CD4-positive, alpha-beta memory T cell (primary cell): ENCODE measurements at regions of chr4 and their contacts with region 1.

Region 1: DNA sequence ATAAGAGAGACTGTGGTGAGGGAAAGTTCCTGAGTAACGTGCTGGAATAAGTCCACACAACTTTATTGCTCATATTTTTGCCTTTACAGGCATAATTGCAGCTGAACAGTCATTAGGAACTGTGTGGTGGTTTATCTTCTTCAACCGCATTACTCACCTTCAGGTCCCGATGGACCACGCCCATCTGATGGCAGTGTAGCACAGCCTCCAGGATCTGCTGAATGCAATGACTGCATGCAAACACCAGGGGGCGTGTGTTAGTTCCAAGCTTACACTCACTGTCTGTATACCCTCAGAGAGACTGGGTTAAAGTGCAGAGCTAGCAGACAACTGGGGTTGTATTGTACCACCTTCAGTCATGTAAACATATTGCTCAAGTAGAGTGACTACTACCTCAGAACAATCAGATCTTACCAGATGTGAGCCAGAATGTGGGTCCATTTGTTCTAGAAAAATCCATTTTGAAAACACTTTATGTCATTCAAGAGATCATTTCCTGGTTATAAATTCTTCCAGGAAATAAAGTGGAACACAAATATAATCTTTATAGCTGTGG is 214.0 kb downstream of the CAMK2D start:
- DNase-seq: peak; percentile 86 to 94 (median 89)
- H3K4me3 ChIP-seq: no peak overlapping the region
- H3K4me3 Mint-ChIP-seq: peak overlapping the region in 1 of 8 donors; percentile 20
- H3K27ac ChIP-seq: no peak overlapping the region
- H3K27ac Mint-ChIP-seq: peak overlapping the region; percentile 0 to 81 (median 50)
- H3K4me1 ChIP-seq: peaks cover 11% of the 10 kb centered on the region
- H3K4me1 Mint-ChIP-seq: peaks cover 9 to 20% (median 10%) of the 10 kb centered on the region in 4 donors
- H3K27me3 ChIP-seq: no peaks in the 10 kb centered on the region
- H3K27me3 Mint-ChIP-seq: no peaks in the 10 kb centered on the region

Region 2: GRCh38 chr4:113394730-113395530 is 152.6 kb before region 1 on chr4:
- CTCF ChIA-PET with region 1: no interaction called
- POLR2A ChIA-PET with region 1: interaction called, 3 read pairs
- intact Hi-C with region 1: loop called (anchors 2 kb)
- DNase-seq: peak; percentile 55 to 75 (median 73)
- H3K4me3 ChIP-seq: no peak overlapping the region
- H3K4me3 Mint-ChIP-seq: no peak overlapping the region
- H3K27ac ChIP-seq: no peak overlapping the region
- H3K27ac Mint-ChIP-seq: no peak overlapping the region
- H3K4me1 ChIP-seq: no peaks in the 10 kb centered on the region
- H3K4me1 Mint-ChIP-seq: peaks cover 0 to 4% (median 0%) of the 10 kb centered on the region in 4 donors
- H3K27me3 ChIP-seq: peaks cover 6% of the 10 kb centered on the region
- H3K27me3 Mint-ChIP-seq: no peaks in the 10 kb centered on the region

Region 3: DNA sequence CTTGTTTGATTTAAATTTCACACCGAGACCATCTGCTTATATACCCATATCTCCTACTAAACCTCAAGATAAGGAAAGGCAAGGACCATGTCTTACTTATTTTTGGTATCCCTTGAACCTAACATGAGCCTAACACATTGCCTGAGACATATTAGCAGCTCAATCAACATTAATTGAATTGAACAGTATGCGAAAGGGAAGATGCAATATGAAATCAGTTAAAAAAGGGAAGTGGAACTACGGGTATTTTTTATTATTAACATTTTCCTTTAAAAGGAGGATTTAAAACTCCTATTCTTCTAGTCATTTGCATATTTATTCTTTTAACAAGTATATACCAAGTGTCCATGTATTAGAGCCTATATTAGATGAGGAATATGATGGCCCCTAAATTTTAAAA is 16.9 kb after region 1 on chr4:
- CTCF ChIA-PET with region 1: interaction called, 49 read pairs
- POLR2A ChIA-PET with region 1: interaction called, 10 read pairs
- intact Hi-C with region 1: loop called (anchors 1 kb)
- DNase-seq: no peak
- H3K4me3 ChIP-seq: no peak overlapping the region
- H3K4me3 Mint-ChIP-seq: peak overlapping the region in 6 of 8 donors; percentile 58 to 88 (median 73)
- H3K27ac ChIP-seq: no peak overlapping the region
- H3K27ac Mint-ChIP-seq: peak overlapping the region in 1 of 7 donors; percentile 59
- H3K4me1 ChIP-seq: peaks cover 38% of the 10 kb centered on the region
- H3K4me1 Mint-ChIP-seq: peaks cover 33 to 52% (median 41%) of the 10 kb centered on the region in 4 donors
- H3K27me3 ChIP-seq: no peaks in the 10 kb centered on the region
- H3K27me3 Mint-ChIP-seq: no peaks in the 10 kb centered on the region

Region 4: GRCh38 chr4:113636438-113636818 is 88.9 kb after region 1 on chr4:
- CTCF ChIA-PET with region 1: interaction called, 21 read pairs
- POLR2A ChIA-PET with region 1: interaction called, 11 read pairs
- intact Hi-C with region 1: loop called (anchors 1 kb)
- DNase-seq: peak; percentile 35 to 48 (median 42)
- H3K4me3 ChIP-seq: no peak overlapping the region
- H3K4me3 Mint-ChIP-seq: peak overlapping the region in 7 of 8 donors; percentile 53 to 82 (median 61)
- H3K27ac ChIP-seq: peak overlapping the region; percentile 29
- H3K27ac Mint-ChIP-seq: peak overlapping the region; percentile 65 to 85 (median 83)
- H3K4me1 ChIP-seq: peaks cover 48% of the 10 kb centered on the region
- H3K4me1 Mint-ChIP-seq: peaks cover 42 to 61% (median 48%) of the 10 kb centered on the region in 4 donors
- H3K27me3 ChIP-seq: no peaks in the 10 kb centered on the region
- H3K27me3 Mint-ChIP-seq: no peaks in the 10 kb centered on the region

Region 5: GRCh38 chr4:113781439-113782040 is 234.0 kb after region 1 on chr4:
- CTCF ChIA-PET with region 1: no interaction called
- POLR2A ChIA-PET with region 1: no interaction called
- intact Hi-C with region 1: loop called (anchors 5 kb)
- DNase-seq: peak in 4 of 5 donors; percentile 25 to 35 (median 30)
- H3K4me3 ChIP-seq: no peak overlapping the region
- H3K4me3 Mint-ChIP-seq: no peak overlapping the region
- H3K27ac ChIP-seq: no peak overlapping the region
- H3K27ac Mint-ChIP-seq: no peak overlapping the region
- H3K4me1 ChIP-seq: no peaks in the 10 kb centered on the region
- H3K4me1 Mint-ChIP-seq: peaks cover 0 to 8% (median 2%) of the 10 kb centered on the region in 4 donors
- H3K27me3 ChIP-seq: no peaks in the 10 kb centered on the region
- H3K27me3 Mint-ChIP-seq: peaks cover 0 to 1% of the 10 kb centered on the region in 2 donors

Region 6: GRCh38 chr4:113908829-113909228 is 361.3 kb after region 1 on chr4:
- CTCF ChIA-PET with region 1: interaction called, 12 read pairs
- POLR2A ChIA-PET with region 1: interaction called, 4 read pairs
- intact Hi-C with region 1: loop called (anchors 1 kb)
- DNase-seq: peak; percentile 12 to 36 (median 24)
- H3K4me3 ChIP-seq: no peak overlapping the region
- H3K4me3 Mint-ChIP-seq: no peak overlapping the region
- H3K27ac ChIP-seq: no peak overlapping the region
- H3K27ac Mint-ChIP-seq: peak overlapping the region in 1 of 7 donors; percentile 14
- H3K4me1 ChIP-seq: peaks cover 28% of the 10 kb centered on the region
- H3K4me1 Mint-ChIP-seq: peaks cover 13 to 36% (median 21%) of the 10 kb centered on the region in 4 donors
- H3K27me3 ChIP-seq: no peaks in the 10 kb centered on the region
- H3K27me3 Mint-ChIP-seq: no peaks in the 10 kb centered on the region

Region 7: DNA sequence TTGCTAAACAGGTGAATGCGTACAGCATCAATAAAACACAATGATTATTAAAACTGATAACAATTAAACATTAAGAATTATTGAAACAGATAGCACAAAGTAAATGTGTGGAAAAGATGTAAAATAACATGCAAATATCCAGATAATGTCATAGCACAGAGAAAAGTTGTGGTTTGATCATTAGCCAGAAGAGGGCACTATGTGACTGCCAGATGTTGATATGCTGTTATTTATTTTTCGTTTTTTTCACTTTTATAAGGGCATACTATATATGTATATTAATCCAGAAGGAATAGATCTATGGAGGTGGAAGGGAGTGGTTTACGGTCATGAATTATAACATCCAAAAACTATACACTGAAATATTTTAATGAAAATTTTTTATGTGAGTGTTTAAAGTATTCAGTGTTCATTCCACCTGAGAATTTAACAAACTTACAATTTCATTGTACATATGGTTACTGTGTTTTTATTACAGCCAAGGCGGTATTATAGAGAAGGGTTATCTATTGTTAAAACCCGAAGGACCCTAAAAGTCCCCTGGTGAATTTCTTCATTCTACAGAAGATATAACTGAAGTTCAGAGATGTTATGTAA is 839.2 kb after region 1 on chr4:
- CTCF ChIA-PET with region 1: no interaction called
- POLR2A ChIA-PET with region 1: no interaction called
- intact Hi-C with region 1: loop called (anchors 5 kb)
- DNase-seq: peak in 4 of 5 donors; percentile 4 to 16 (median 6)
- H3K4me3 ChIP-seq: no peak overlapping the region
- H3K4me3 Mint-ChIP-seq: no peak overlapping the region
- H3K27ac ChIP-seq: no peak overlapping the region
- H3K27ac Mint-ChIP-seq: no peak overlapping the region
- H3K4me1 ChIP-seq: no peaks in the 10 kb centered on the region
- H3K4me1 Mint-ChIP-seq: no peaks in the 10 kb centered on the region
- H3K27me3 ChIP-seq: no peaks in the 10 kb centered on the region
- H3K27me3 Mint-ChIP-seq: peaks cover 3 to 4% of the 10 kb centered on the region in 2 donors

Region 8: GRCh38 chr4:114464726-114465272 is 917.2 kb after region 1 on chr4:
- CTCF ChIA-PET with region 1: no interaction called
- POLR2A ChIA-PET with region 1: no interaction called
- intact Hi-C with region 1: no loop called
- DNase-seq: no peak
- H3K4me3 ChIP-seq: no peak overlapping the region
- H3K4me3 Mint-ChIP-seq: no peak overlapping the region
- H3K27ac ChIP-seq: no peak overlapping the region
- H3K27ac Mint-ChIP-seq: no peak overlapping the region
- H3K4me1 ChIP-seq: no peaks in the 10 kb centered on the region
- H3K4me1 Mint-ChIP-seq: no peaks in the 10 kb centered on the region
- H3K27me3 ChIP-seq: no peaks in the 10 kb centered on the region
- H3K27me3 Mint-ChIP-seq: peaks cover 1 to 2% of the 10 kb centered on the region in 2 donors